Caco-2 (cell line): ENCODE measurements at regions of chr16 and their contacts with region 1.

Region 1: GRCh38 chr16:8173111-8173644 is 417.1 kb downstream of the TMEM114 start:
- DNase-seq: peak; percentile 84 to 87
- H3K4me3 ChIP-seq: no peak overlapping the region
- H3K4me3 Mint-ChIP-seq: no peak overlapping the region
- H3K27ac Mint-ChIP-seq: no peak overlapping the region
- H3K4me1 ChIP-seq: no peaks in the 10 kb centered on the region
- H3K4me1 Mint-ChIP-seq: no peaks in the 10 kb centered on the region
- H3K27me3 ChIP-seq: no peaks in the 10 kb centered on the region
- H3K27me3 Mint-ChIP-seq: peaks cover 6% of the 10 kb centered on the region
- CTCF ChIP-seq: peak; percentile 91 to 95

Region 2: DNA sequence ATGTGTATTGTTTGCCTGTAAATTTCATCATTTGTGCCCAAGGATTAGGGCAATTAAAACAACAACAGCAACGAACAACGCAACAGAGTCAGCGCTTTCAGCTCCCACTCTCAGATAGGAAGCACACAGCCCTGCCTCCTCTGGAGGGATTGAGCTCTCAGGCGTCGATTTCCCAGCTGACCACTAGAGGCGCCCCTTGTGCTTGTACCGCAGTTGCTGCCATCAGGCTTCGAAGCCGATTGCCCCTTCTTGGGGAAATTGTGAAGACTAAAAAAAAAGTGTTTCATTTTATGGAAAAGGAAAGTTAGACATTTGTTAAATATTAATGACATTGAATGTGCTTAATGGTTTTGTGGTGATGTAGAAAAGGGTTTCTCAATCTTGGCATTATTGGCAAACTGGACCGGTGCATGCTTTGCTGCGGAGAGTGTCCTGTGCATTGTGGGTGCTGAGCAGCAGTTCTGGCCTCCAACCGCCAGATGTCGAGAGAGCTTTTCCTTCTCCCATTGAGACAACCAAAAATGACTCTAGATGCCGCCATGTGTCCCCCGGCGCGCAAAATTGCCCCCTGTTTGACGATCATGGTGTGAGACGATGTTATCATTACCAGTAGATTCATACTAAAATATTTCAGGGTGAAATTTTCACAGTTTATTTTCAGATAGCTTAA is 1490.9 kb before region 1 on chr16:
- CTCF ChIA-PET with region 1: no interaction called
- POLR2A ChIA-PET with region 1: no interaction called
- intact Hi-C with region 1: loop called (anchors 1 kb)
- DNase-seq: peak; percentile 35 to 37
- H3K4me3 ChIP-seq: no peak overlapping the region
- H3K4me3 Mint-ChIP-seq: no peak overlapping the region
- H3K27ac Mint-ChIP-seq: no peak overlapping the region
- H3K4me1 ChIP-seq: no peaks in the 10 kb centered on the region
- H3K4me1 Mint-ChIP-seq: no peaks in the 10 kb centered on the region
- H3K27me3 ChIP-seq: no peaks in the 10 kb centered on the region
- H3K27me3 Mint-ChIP-seq: no peaks in the 10 kb centered on the region
- CTCF ChIP-seq: peak; percentile 47 to 55

Region 3: GRCh38 chr16:7405166-7405852 is 767.9 kb before region 1 on chr16:
- CTCF ChIA-PET with region 1: no interaction called
- POLR2A ChIA-PET with region 1: no interaction called
- intact Hi-C with region 1: loop called (anchors 1 kb)
- DNase-seq: peak; percentile 49 to 50
- H3K4me3 ChIP-seq: no peak overlapping the region
- H3K4me3 Mint-ChIP-seq: no peak overlapping the region
- H3K27ac Mint-ChIP-seq: no peak overlapping the region
- H3K4me1 ChIP-seq: no peaks in the 10 kb centered on the region
- H3K4me1 Mint-ChIP-seq: no peaks in the 10 kb centered on the region
- H3K27me3 ChIP-seq: no peaks in the 10 kb centered on the region
- H3K27me3 Mint-ChIP-seq: peaks cover 12% of the 10 kb centered on the region
- CTCF ChIP-seq: peak; percentile 26 to 59

Region 4: GRCh38 chr16:7964167-7964566 is 209.0 kb before region 1 on chr16:
- CTCF ChIA-PET with region 1: no interaction called
- POLR2A ChIA-PET with region 1: no interaction called
- intact Hi-C with region 1: no loop called
- DNase-seq: no peak
- H3K4me3 ChIP-seq: no peak overlapping the region
- H3K4me3 Mint-ChIP-seq: no peak overlapping the region
- H3K27ac Mint-ChIP-seq: no peak overlapping the region
- H3K4me1 ChIP-seq: no peaks in the 10 kb centered on the region
- H3K4me1 Mint-ChIP-seq: no peaks in the 10 kb centered on the region
- H3K27me3 ChIP-seq: no peaks in the 10 kb centered on the region
- H3K27me3 Mint-ChIP-seq: peaks cover 7% of the 10 kb centered on the region
- CTCF ChIP-seq: no peak